MCF 10A (cell line): ENCODE measurements at regions of chr16 and their contacts with region 1.

Region 1: DNA sequence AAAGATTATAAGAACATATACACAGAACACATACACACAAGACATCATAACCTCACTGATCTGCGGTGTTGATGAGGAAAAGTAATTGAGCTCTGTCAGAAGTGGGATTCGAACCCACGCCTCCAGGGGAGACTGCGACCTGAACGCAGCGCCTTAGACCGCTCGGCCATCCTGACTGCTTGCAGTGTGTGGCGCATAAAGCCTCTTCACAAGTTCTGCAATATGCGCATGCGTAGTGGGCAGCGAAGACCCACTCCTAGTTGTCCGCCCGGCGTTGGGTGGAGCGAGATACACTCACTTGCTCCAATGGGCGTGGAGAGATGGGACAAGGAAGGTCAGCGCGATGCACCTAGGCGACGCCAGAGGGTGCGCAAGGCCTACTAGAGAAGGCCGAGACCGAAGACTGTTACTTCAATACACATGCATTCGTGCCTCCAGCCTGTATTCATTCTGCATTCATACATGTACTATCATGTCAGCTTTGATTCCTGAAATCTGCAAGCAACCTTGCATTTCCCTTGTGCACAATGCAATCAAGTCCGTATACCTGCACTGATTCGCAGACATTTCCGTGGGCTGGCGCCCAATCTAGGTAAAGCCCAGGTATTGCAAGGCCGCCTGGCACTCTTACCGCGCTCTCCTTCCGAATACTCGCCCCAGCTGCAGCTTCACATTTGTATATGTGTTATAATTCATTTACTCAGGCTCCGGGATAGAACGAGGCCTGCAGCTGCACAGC is 16.1 kb upstream of the PLLP start:
- DNase-seq: peak; percentile 100
- H3K4me3 Mint-ChIP-seq: no peak overlapping the region
- H3K27ac Mint-ChIP-seq: no peak overlapping the region
- H3K4me1 Mint-ChIP-seq: no peaks in the 10 kb centered on the region
- H3K27me3 Mint-ChIP-seq: no peaks in the 10 kb centered on the region
- CTCF ChIP-seq: peak; percentile 93

Region 2: DNA sequence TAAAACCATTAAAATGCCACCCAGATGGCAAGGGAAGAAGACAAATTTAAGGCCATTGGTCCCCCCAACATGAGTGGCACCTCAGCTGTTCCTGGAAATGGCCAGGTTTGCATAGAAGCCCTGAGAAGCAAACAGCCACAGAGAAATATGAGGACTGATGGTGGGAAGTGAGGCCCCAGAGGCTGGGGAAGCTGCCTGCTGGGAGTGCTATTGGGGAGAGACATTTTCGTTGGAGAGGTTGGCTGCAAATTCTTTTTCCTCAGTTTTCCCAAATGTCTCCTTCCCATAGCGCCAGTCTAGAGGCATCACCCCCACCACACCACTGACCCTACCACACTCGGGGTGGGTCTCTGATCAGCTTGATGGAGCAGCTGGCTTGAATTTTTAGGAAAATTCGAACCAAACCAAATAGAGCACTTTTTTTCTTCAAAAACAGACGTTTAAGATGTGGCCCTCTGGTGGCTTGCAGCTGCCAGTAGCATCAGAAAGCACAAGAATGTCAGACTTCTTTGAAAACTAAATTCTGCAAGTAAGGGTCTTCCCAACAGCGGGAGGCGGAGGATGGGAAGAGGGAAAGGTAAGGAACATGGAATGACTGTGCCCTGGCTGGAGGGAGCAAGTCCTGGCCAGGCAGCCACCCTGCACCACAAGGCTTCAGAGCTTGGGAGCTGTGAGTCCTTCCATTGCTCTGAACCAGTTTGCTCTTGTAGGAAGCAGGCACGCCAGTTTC is 448.7 kb before region 1 on chr16:
- CTCF ChIA-PET with region 1: no interaction called
- POLR2A ChIA-PET with region 1: no interaction called
- intact Hi-C with region 1: no loop called
- DNase-seq: no peak
- H3K4me3 Mint-ChIP-seq: no peak overlapping the region
- H3K27ac Mint-ChIP-seq: no peak overlapping the region
- H3K4me1 Mint-ChIP-seq: peaks cover 32% of the 10 kb centered on the region
- H3K27me3 Mint-ChIP-seq: no peaks in the 10 kb centered on the region
- CTCF ChIP-seq: no peak

Region 3: GRCh38 chr16:56964243-56965148 is 336.1 kb before region 1 on chr16:
- CTCF ChIA-PET with region 1: no interaction called
- POLR2A ChIA-PET with region 1: no interaction called
- intact Hi-C with region 1: no loop called
- DNase-seq: peak; percentile 59
- H3K4me3 Mint-ChIP-seq: no peak overlapping the region
- H3K27ac Mint-ChIP-seq: no peak overlapping the region
- H3K4me1 Mint-ChIP-seq: peaks cover 5% of the 10 kb centered on the region
- H3K27me3 Mint-ChIP-seq: no peaks in the 10 kb centered on the region
- CTCF ChIP-seq: peak; percentile 45

Region 4: GRCh38 chr16:57084257-57084770 is 216.2 kb before region 1 on chr16:
- CTCF ChIA-PET with region 1: no interaction called
- POLR2A ChIA-PET with region 1: no interaction called
- intact Hi-C with region 1: loop called (anchors 1 kb)
- DNase-seq: peak; percentile 74
- H3K4me3 Mint-ChIP-seq: no peak overlapping the region
- H3K27ac Mint-ChIP-seq: no peak overlapping the region
- H3K4me1 Mint-ChIP-seq: peaks cover 4% of the 10 kb centered on the region
- H3K27me3 Mint-ChIP-seq: no peaks in the 10 kb centered on the region
- CTCF ChIP-seq: peak; percentile 92

Region 5: DNA sequence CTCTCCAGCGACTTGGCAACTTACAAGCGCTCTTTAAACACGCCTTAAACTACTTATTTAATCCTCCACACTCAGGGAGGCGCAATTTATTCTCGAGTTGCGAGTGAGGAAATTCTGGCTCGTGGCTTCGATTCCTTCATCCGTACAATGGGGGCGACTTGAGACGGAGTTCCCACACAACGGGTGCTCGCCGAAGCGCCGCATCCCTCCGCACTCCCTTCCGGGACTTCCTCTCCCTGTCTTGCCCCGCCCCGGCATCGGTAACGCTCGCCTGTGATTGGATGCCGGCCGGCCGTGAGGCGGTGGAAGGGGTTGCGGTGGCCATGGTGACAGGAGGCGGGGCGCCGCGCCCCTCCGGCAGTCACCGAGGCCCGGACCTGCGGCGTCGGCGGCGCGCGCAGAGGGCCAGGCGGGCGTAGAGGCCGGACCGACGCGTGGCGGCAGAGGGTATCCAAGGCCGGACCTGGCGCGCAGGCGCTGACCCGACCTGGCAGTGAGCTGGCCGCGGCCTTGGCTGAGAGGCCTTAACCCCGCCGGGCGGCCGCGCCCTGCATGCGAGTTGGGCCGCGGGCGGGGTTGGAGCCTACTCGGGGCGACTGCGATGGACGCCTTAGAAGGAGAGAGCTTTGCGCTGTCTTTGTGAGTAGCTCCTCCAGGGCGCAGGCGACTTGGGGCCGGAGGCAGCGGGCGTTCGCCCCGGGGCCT is 55.6 kb before region 1 on chr16 and contains the start of gene ARL2BP:
- CTCF ChIA-PET with region 1: interaction called, 4 read pairs
- POLR2A ChIA-PET with region 1: interaction called, 31 read pairs
- intact Hi-C with region 1: loop called (anchors 1 kb)
- DNase-seq: peak; percentile 97
- H3K4me3 Mint-ChIP-seq: peak within 1 kb of the TSS; percentile 82
- H3K27ac Mint-ChIP-seq: peak within 1 kb of the TSS; percentile 97
- H3K4me1 Mint-ChIP-seq: peaks cover 10% of the 10 kb centered on the region
- H3K27me3 Mint-ChIP-seq: no peaks in the 10 kb centered on the region
- CTCF ChIP-seq: peak; percentile 8
- total RNA-seq, gene ARL2BP: 94.4 and 114 TPM in 2 replicates

Region 6: DNA sequence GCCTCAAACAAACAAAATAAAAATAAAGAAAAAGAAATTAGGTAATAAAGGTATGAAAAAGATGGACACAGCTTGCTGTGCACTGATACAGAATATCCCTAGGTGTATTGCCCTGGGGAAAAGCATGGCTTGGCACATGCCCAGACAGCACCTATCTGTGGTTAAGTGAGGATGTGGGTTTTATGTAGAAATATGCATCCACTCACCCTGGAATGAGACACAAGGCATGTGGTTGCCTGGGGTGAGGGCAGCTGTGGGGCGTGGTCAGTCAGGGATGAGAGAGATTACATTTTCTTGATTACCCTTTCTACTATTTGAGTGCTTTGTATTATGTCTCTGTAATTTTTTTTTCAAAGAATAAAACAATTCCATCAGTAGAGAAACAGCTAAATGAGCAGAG is 23.0 kb before region 1 on chr16:
- CTCF ChIA-PET with region 1: interaction called, 7 read pairs
- POLR2A ChIA-PET with region 1: interaction called, 42 read pairs
- intact Hi-C with region 1: loop called (anchors 2 kb)
- DNase-seq: peak; percentile 94
- H3K4me3 Mint-ChIP-seq: peak overlapping the region; percentile 53
- H3K27ac Mint-ChIP-seq: peak overlapping the region; percentile 89
- H3K4me1 Mint-ChIP-seq: peaks cover 36% of the 10 kb centered on the region
- H3K27me3 Mint-ChIP-seq: no peaks in the 10 kb centered on the region
- CTCF ChIP-seq: no peak

Region 7: GRCh38 chr16:57422026-57422944 is 121.7 kb after region 1 on chr16:
- CTCF ChIA-PET with region 1: interaction called, 211 read pairs
- POLR2A ChIA-PET with region 1: interaction called, 34 read pairs
- intact Hi-C with region 1: loop called (anchors 1 kb)
- DNase-seq: peak; percentile 69
- H3K4me3 Mint-ChIP-seq: no peak overlapping the region
- H3K27ac Mint-ChIP-seq: no peak overlapping the region
- H3K4me1 Mint-ChIP-seq: peaks cover 21% of the 10 kb centered on the region
- H3K27me3 Mint-ChIP-seq: no peaks in the 10 kb centered on the region
- CTCF ChIP-seq: peak; percentile 51

Region 8: GRCh38 chr16:57519796-57520360 is 219.3 kb after region 1 on chr16:
- CTCF ChIA-PET with region 1: interaction called, 7 read pairs
- POLR2A ChIA-PET with region 1: interaction called, 3 read pairs
- intact Hi-C with region 1: loop called (anchors 1 kb)
- DNase-seq: peak; percentile 67
- H3K4me3 Mint-ChIP-seq: no peak overlapping the region
- H3K27ac Mint-ChIP-seq: no peak overlapping the region
- H3K4me1 Mint-ChIP-seq: no peaks in the 10 kb centered on the region
- H3K27me3 Mint-ChIP-seq: no peaks in the 10 kb centered on the region
- CTCF ChIP-seq: peak; percentile 92